PC-9 (cell line): ENCODE measurements at regions of chr12 and their contacts with region 1.

Region 1: GRCh38 chr12:88052686-88053085 is 23.5 kb upstream of the C12orf50 start:
- DNase-seq: peak in 1 of 2 experiments; percentile 23
- H3K4me3 ChIP-seq: no peak overlapping the region
- H3K27ac ChIP-seq: no peak overlapping the region
- H3K4me1 ChIP-seq: no peaks in the 10 kb centered on the region
- H3K27me3 ChIP-seq: no peaks in the 10 kb centered on the region
- CTCF ChIP-seq: peak; percentile 63

Region 2: GRCh38 chr12:86572455-86572854 is 1480.2 kb before region 1 on chr12:
- CTCF ChIA-PET with region 1: interaction called, 10 read pairs
- POLR2A ChIA-PET with region 1: no interaction called
- intact Hi-C with region 1: no loop called
- DNase-seq: no peak
- H3K4me3 ChIP-seq: no peak overlapping the region
- H3K27ac ChIP-seq: no peak overlapping the region
- H3K4me1 ChIP-seq: no peaks in the 10 kb centered on the region
- H3K27me3 ChIP-seq: no peaks in the 10 kb centered on the region
- CTCF ChIP-seq: no peak

Region 3: DNA sequence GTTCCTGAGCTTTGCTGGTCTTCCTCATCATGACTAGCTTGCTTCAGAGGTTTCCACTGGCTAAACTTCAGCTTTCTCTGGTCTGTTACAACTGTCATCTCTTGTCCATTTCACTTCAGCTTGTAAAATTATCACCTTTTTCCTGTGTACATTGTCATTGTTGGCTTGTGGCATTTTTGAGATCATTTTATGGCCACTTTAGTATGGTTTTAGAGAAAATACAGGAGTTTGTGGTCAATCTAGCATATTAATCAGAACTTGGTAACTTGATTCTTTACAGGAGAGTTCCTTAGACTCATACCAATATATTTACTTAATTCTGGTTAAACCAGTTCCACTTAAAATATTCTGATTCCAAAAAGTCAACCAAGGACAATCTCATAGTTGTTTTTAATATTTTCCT is 763.5 kb after region 1 on chr12:
- CTCF ChIA-PET with region 1: no interaction called
- POLR2A ChIA-PET with region 1: interaction called, 19 read pairs
- intact Hi-C with region 1: no loop called
- DNase-seq: peak; percentile 3 to 80
- H3K4me3 ChIP-seq: peak overlapping the region; percentile 40; the same call in 1 of the 2 replicates
- H3K27ac ChIP-seq: peak overlapping the region; percentile 66
- H3K4me1 ChIP-seq: peaks cover 25% of the 10 kb centered on the region
- H3K27me3 ChIP-seq: no peaks in the 10 kb centered on the region
- CTCF ChIP-seq: no peak